A673 (cell line): ENCODE measurements at regions of chr7 and their contacts with region 1.

Region 1: DNA sequence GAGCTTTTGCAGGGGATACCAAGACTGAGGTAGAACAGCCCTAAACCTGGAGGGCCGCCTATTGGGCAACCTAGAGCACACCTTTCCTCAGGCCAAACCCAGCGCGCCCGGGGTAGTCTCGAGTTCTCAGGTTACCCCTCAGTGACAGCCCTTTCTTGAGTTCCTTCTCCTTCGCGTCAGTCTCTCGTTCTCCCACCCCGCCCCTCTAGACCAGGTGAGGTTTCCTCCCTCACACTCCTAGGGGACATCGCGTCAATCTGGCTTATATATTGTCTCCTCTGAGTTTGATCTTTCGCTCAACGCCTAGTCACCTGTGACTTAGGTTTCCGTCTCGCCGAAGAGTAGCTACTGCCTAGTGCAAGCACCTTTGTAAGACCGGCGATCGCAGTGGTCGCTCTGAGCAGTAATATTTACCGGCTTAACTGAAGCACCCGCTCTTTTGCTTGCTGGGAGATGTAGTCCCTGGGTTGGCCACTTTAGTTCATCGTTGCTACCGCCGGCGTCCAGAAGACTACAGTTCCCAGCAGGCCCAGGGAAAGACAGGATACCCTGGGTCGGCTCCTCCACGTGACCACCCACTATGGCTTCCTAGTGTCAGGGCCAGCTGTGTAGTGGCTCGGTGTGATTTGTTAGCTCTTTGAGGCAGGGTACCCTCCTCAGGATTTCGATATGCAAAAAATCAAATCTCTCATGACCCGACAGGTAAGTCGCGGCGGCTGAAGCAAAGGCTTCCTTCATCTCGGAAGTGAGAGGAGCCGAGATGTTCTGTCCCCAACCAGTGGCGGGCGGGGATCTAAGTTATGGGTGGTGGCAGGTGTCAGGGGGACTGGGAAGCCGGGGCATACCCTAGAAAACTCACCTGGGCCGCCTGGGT is at the start of gene VPS50:
- DNase-seq: peak; percentile 98
- H3K4me3 ChIP-seq: peak within 1 kb of the TSS; percentile 71
- H3K27ac ChIP-seq: no peak within 1 kb of the TSS
- H3K4me1 ChIP-seq: peaks cover 4% of the 10 kb centered on the region
- H3K27me3 ChIP-seq: no peaks in the 10 kb centered on the region
- CTCF ChIP-seq: no peak
- total RNA-seq, gene VPS50: 18.1 and 19.0 TPM in 2 replicates

Region 2: GRCh38 chr7:93092757-93093370 is 139.2 kb before region 1 on chr7:
- CTCF ChIA-PET with region 1: no interaction called
- POLR2A ChIA-PET with region 1: no interaction called
- intact Hi-C with region 1: loop called (anchors 2 kb)
- DNase-seq: peak; percentile 41
- H3K4me3 ChIP-seq: no peak overlapping the region
- H3K27ac ChIP-seq: no peak overlapping the region
- H3K4me1 ChIP-seq: no peaks in the 10 kb centered on the region
- H3K27me3 ChIP-seq: peaks cover 25% of the 10 kb centered on the region
- CTCF ChIP-seq: peak; percentile 47

Region 3: GRCh38 chr7:93245525-93246432 is 13.7 kb after region 1 on chr7:
- CTCF ChIA-PET with region 1: no interaction called
- POLR2A ChIA-PET with region 1: no interaction called
- intact Hi-C with region 1: no loop called
- DNase-seq: peak; percentile 45
- H3K4me3 ChIP-seq: no peak overlapping the region
- H3K27ac ChIP-seq: no peak overlapping the region
- H3K4me1 ChIP-seq: no peaks in the 10 kb centered on the region
- H3K27me3 ChIP-seq: no peaks in the 10 kb centered on the region
- CTCF ChIP-seq: peak; percentile 66

Region 4: DNA sequence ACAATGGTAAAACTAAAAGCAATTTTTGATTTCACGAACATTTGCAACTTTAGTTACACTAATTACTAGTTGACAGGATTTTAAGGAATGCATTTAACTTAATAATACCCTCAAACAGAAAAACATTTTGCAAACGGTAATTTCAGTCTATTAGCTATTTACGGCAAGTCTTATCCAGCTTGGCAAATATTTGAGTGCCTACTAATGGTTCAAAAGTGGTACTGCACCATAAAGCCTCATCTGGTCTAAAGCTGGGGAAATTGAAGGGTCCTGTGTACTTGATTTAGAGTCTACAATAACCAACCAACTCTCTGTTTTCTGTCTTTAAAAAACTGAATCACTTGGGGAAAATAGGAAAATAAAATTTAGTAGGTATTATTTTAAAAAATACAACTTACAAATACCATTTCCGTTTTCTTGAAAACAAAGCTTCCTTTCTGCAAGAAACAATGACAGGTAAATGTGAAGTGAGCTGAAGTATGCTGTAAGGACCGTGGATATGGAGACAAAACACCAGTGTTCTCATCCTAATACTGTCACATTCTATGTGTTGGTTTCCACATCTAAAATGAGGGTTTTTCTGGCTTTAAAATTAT is 142.4 kb after region 1 on chr7:
- CTCF ChIA-PET with region 1: no interaction called
- POLR2A ChIA-PET with region 1: no interaction called
- intact Hi-C with region 1: no loop called
- DNase-seq: peak; percentile 45
- H3K4me3 ChIP-seq: no peak overlapping the region
- H3K27ac ChIP-seq: no peak overlapping the region
- H3K4me1 ChIP-seq: no peaks in the 10 kb centered on the region
- H3K27me3 ChIP-seq: peaks cover 4% of the 10 kb centered on the region
- CTCF ChIP-seq: peak; percentile 76

Region 5: DNA sequence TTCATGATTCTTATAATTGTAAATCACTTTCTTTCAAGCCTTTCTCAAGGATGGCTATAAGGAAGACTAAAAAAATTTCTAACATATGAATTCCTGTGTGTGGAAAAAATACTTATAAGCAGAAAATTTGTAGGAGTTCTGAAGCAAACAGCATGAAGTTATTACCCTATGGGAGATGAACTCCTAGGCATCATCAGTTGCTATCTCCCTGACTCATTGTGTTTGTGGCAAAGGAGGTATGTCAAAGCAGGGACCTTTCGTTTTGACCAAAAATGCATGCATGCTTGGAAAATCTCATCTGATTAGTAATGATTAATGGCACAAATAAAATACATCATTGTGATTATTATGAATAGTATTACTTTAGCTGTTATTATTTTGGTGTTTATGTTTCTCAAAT is 283.1 kb after region 1 on chr7:
- CTCF ChIA-PET with region 1: no interaction called
- POLR2A ChIA-PET with region 1: no interaction called
- intact Hi-C with region 1: no loop called
- DNase-seq: no peak
- H3K4me3 ChIP-seq: no peak overlapping the region
- H3K27ac ChIP-seq: no peak overlapping the region
- H3K4me1 ChIP-seq: no peaks in the 10 kb centered on the region
- H3K27me3 ChIP-seq: no peaks in the 10 kb centered on the region
- CTCF ChIP-seq: no peak